ENCODE measurements at regions of chr19 and their contacts with region 1.

Region 1: DNA sequence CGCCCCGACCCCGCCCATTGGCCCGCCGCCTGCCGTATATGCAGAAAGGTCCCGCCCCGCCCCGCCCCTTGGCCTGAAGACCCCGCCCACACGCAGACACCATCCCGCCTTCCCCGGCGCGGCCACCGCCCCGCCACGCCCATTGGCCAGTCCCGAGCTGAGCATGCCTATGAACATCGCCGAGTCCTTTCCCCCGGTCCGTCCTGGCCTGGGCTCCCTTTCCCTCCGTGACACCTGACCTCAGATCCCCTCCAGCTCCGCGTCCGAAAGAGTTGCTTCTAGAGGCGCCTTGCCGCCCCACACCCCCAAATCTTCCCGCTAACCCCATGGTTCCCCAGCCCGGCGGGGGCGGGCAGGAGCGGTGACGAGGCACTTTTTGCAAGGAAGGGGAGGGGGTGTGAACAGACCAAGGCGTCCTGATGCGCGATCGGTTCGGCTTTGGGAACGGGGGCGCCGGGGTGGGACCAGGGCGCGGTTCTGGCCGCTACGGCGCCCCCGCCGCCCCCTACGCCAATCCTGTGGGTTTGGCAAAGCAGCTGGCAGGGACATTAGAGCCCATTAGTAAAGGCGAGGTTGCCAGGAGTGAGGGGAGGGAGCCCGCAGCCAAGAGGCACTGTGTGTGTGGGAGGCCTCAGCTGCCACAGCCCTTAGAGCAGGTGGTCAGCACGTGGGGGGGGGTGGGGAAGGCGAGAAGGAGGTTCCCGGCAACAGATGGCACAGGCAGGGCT is 406 bp upstream of the NUMBL start:
- DNase-seq: peak; percentile 70 to 91
- H3K4me3 ChIP-seq: peak overlapping the region; percentile 54 to 76 (median 70)
- H3K27ac ChIP-seq: peak overlapping the region; percentile 86
- H3K4me1 ChIP-seq: peaks cover 0 to 25% (median 15%) of the 10 kb centered on the region in 4 experiments; a peak in 6 of 7 replicates
- H3K27me3 ChIP-seq: no peaks in the 10 kb centered on the region
- CTCF ChIP-seq: no peak
- EP300 ChIP-seq: no peak
- POLR2A ChIP-seq: peak in 1 of 2 experiments; percentile 30; a peak in 2 of 3 replicates
- RAD21 ChIP-seq: no peak

Region 2: DNA sequence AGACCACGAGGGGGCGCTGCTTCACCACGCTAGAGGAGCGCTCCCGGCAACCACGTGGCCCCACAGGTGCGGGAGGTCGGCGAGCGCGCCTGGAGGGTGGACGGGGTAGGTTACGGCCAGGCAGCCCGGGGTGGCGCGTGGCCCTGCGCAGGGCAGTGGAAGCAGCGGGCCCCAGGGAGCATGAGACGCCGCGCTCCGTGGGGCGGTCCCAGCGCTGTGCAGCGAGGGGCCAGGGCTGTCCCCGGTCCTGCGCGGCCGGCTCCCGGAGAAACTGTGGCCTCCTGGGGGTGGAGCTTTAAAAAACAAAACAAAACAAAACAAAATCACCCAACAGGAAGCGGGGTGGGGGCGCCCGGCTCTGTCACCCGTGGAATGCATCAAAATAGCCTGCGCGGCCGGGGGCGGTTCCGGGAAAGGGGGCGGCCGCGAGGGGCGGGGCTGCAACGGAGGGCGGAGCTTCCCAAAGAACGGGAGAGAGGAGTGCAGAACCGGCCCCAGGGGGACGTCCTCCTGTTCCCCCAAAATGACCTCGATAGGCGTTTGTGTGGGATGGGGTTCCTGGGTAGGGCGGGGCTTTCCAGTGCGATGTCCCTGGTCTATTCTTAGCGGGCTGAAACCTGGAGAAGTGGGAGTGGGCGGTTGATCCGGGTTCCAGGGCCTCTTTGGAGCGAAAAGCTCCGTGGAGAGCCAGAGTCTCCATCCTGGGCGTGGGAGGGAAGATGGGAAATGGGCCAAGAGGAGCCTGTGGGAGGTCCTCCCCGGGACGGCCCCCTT is 27.7 kb before region 1 on chr19:
- CTCF ChIA-PET with region 1: interaction called, 6 read pairs
- POLR2A ChIA-PET with region 1: interaction called, 13 read pairs
- DNase-seq: peak; percentile 70 to 98
- H3K4me3 ChIP-seq: peak overlapping the region; percentile 35 to 74 (median 60)
- H3K27ac ChIP-seq: no peak overlapping the region; the same call in 1 of the 2 replicates
- H3K4me1 ChIP-seq: peaks cover 0 to 4% (median 3%) of the 10 kb centered on the region in 4 experiments; a peak in 5 of 7 replicates
- H3K27me3 ChIP-seq: no peaks in the 10 kb centered on the region
- CTCF ChIP-seq: peak; percentile 82 to 95 (median 93)
- EP300 ChIP-seq: no peak
- POLR2A ChIP-seq: no peak; a peak in 1 of 3 replicates
- RAD21 ChIP-seq: peak; percentile 92 to 97

Region 3: GRCh38 chr19:40702337-40703012 is 11.6 kb after region 1 on chr19:
- CTCF ChIA-PET with region 1: interaction called, 15 read pairs
- POLR2A ChIA-PET with region 1: interaction called, 24 read pairs
- DNase-seq: peak in 1 of 2 experiments; percentile 84
- H3K4me3 ChIP-seq: no peak overlapping the region
- H3K27ac ChIP-seq: no peak overlapping the region; the same call in 1 of the 2 replicates
- H3K4me1 ChIP-seq: peaks cover 0 to 4% (median 1%) of the 10 kb centered on the region in 4 experiments; a peak in 5 of 7 replicates
- H3K27me3 ChIP-seq: no peaks in the 10 kb centered on the region
- CTCF ChIP-seq: peak; percentile 74 to 83 (median 75)
- EP300 ChIP-seq: no peak
- POLR2A ChIP-seq: no peak
- RAD21 ChIP-seq: peak; percentile 60 to 66

Region 4: DNA sequence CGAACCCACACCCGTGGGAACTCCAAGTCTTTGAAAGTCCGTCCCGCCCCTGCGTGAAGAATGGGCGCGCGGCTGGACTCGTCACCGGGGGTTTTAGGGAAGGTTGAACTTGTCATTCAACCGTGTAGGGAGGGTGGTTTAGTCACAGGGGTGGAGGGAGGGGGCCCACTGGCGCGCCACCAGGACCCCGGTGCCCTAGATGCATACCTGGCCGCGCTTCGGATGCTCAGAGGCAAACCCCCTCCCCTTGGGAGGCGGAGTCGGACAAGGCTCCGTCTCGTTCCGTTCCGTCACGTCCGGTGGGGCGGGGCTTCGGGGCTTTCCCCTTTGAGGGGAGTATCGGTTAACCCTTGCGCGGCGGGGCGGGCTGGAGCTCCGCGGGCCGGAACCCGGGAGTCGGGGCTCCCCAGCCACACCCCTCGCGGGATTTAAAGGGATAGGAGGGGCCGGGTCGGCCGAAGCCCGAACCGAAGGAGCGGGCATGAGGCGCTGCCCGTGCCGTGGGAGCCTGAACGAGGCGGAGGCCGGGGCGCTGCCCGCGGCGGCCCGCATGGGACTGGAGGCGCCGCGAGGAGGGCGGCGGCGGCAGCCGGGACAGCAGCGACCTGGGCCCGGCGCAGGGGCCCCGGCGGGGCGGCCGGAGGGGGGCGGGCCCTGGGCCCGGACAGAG is 25.9 kb after region 1 on chr19 and contains the starts of genes COQ8B and ITPKC:
- CTCF ChIA-PET with region 1: interaction called, 3 read pairs
- POLR2A ChIA-PET with region 1: interaction called, 21 read pairs
- DNase-seq: peak; percentile 90 to 100
- H3K4me3 ChIP-seq: peak within 1 kb of the TSS; percentile 72 to 94 (median 90)
- H3K27ac ChIP-seq: peak within 1 kb of the TSS; percentile 74
- H3K4me1 ChIP-seq: peaks cover 0 to 25% (median 8%) of the 10 kb centered on the region in 4 experiments; a peak in 6 of 7 replicates
- H3K27me3 ChIP-seq: no peaks in the 10 kb centered on the region
- CTCF ChIP-seq: peak in 1 of 3 experiments; percentile 3; a peak in 1 of 4 replicates
- EP300 ChIP-seq: peak; percentile 71 to 99
- POLR2A ChIP-seq: peak in 1 of 2 experiments; percentile 70; a peak in 1 of 3 replicates
- RAD21 ChIP-seq: no peak
- total RNA-seq, gene COQ8B: 39.3 and 41.7 TPM in 2 replicates
- total RNA-seq, gene ITPKC: 8.9 and 9.5 TPM in 2 replicates

Region 5: GRCh38 chr19:40777937-40778705 is 87.3 kb after region 1 on chr19 and contains the start of gene RAB4B:
- CTCF ChIA-PET with region 1: no interaction called
- POLR2A ChIA-PET with region 1: interaction called, 10 read pairs
- DNase-seq: peak; percentile 100
- H3K4me3 ChIP-seq: peak within 1 kb of the TSS; percentile 79 to 90 (median 86)
- H3K27ac ChIP-seq: peak within 1 kb of the TSS; percentile 99
- H3K4me1 ChIP-seq: peaks cover 0 to 14% (median 6%) of the 10 kb centered on the region in 4 experiments; a peak in 6 of 7 replicates
- H3K27me3 ChIP-seq: no peaks in the 10 kb centered on the region
- CTCF ChIP-seq: no peak
- EP300 ChIP-seq: no peak
- POLR2A ChIP-seq: no peak
- RAD21 ChIP-seq: no peak
- total RNA-seq, gene RAB4B: 15.8 and 15.9 TPM in 2 replicates

Region 6: GRCh38 chr19:40798223-40798996 is 107.6 kb after region 1 on chr19:
- CTCF ChIA-PET with region 1: no interaction called
- POLR2A ChIA-PET with region 1: interaction called, 11 read pairs
- DNase-seq: peak; percentile 99 to 100
- H3K4me3 ChIP-seq: peak overlapping the region; percentile 52 to 70 (median 64)
- H3K27ac ChIP-seq: peak overlapping the region; percentile 79
- H3K4me1 ChIP-seq: peaks cover 0 to 32% (median 19%) of the 10 kb centered on the region in 4 experiments; a peak in 6 of 7 replicates
- H3K27me3 ChIP-seq: no peaks in the 10 kb centered on the region
- CTCF ChIP-seq: peak; percentile 51 to 84 (median 59); a peak in 3 of 4 replicates
- EP300 ChIP-seq: no peak
- POLR2A ChIP-seq: peak; percentile 51 to 92
- RAD21 ChIP-seq: peak; percentile 45 to 52